ENCODE measurements at regions of chr11 and their contacts with region 1.

Region 1: GRCh38 chr11:45252134-45252855 is 33.8 kb downstream of the SYT13 start:
- DNase-seq: peak; percentile 54 to 96
- H3K4me3 ChIP-seq: no peak overlapping the region
- H3K27ac ChIP-seq: no peak overlapping the region
- H3K4me1 ChIP-seq: no peaks in the 10 kb centered on the region; a peak in 1 of 7 replicates
- H3K27me3 ChIP-seq: no peaks in the 10 kb centered on the region
- CTCF ChIP-seq: peak; percentile 90 to 95 (median 92)
- EP300 ChIP-seq: no peak; a peak in 1 of 3 replicates
- POLR2A ChIP-seq: no peak
- RAD21 ChIP-seq: peak; percentile 83 to 86

Region 2: GRCh38 chr11:45209891-45210699 is 42.2 kb before region 1 on chr11:
- CTCF ChIA-PET with region 1: interaction called, 22 read pairs
- POLR2A ChIA-PET with region 1: no interaction called
- DNase-seq: peak in 1 of 2 experiments; percentile 70
- H3K4me3 ChIP-seq: no peak overlapping the region
- H3K27ac ChIP-seq: no peak overlapping the region
- H3K4me1 ChIP-seq: peaks cover 3 to 22% (median 14%) of the 10 kb centered on the region in 4 experiments
- H3K27me3 ChIP-seq: no peaks in the 10 kb centered on the region
- CTCF ChIP-seq: no peak
- EP300 ChIP-seq: peak; percentile 66 to 89; a peak in 1 of 3 replicates
- POLR2A ChIP-seq: peak in 1 of 2 experiments; percentile 39; a peak in 1 of 3 replicates
- RAD21 ChIP-seq: no peak

Region 3: GRCh38 chr11:45233121-45233803 is 19.0 kb before region 1 on chr11:
- CTCF ChIA-PET with region 1: interaction called, 78 read pairs
- POLR2A ChIA-PET with region 1: interaction called, 3 read pairs
- DNase-seq: peak; percentile 53 to 94
- H3K4me3 ChIP-seq: peak overlapping the region in 1 of 4 experiments; percentile 22; a peak in 1 of 8 replicates
- H3K27ac ChIP-seq: no peak overlapping the region
- H3K4me1 ChIP-seq: peaks cover 0 to 4% (median 2%) of the 10 kb centered on the region in 4 experiments; a peak in 2 of 7 replicates
- H3K27me3 ChIP-seq: no peaks in the 10 kb centered on the region
- CTCF ChIP-seq: peak; percentile 73 to 98 (median 94)
- EP300 ChIP-seq: no peak
- POLR2A ChIP-seq: no peak
- RAD21 ChIP-seq: peak; percentile 52 to 59

Region 4: DNA sequence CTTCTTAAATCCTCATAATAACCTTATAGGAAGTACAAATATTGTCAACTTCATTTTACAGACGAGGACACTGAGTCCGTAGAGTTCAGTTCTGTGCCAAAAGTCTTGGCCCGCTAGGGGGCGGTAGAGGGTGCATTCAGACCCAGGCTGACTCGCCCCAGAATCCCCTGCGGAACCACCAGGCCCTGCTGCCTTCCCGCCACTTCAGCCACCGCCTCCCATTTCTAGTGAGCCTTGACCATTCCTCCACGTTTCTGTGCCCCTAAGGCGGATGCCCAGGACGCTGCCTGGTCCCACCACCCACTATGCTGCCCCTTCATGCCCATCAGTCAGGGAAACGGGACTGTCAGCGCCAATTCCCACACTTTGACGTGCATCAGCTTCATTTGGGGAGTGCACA is 14.8 kb after region 1 on chr11:
- CTCF ChIA-PET with region 1: interaction called, 63 read pairs
- POLR2A ChIA-PET with region 1: no interaction called
- DNase-seq: peak in 1 of 2 experiments; percentile 97
- H3K4me3 ChIP-seq: no peak overlapping the region
- H3K27ac ChIP-seq: no peak overlapping the region
- H3K4me1 ChIP-seq: peaks cover 0 to 2% (median 0%) of the 10 kb centered on the region in 4 experiments; a peak in 1 of 7 replicates
- H3K27me3 ChIP-seq: peaks cover 0 to 7% (median under 1%) of the 10 kb centered on the region in 4 experiments; a peak in 3 of 7 replicates
- CTCF ChIP-seq: peak; percentile 82 to 86 (median 84)
- EP300 ChIP-seq: no peak
- POLR2A ChIP-seq: no peak
- RAD21 ChIP-seq: peak; percentile 61 to 65

Region 5: GRCh38 chr11:45285930-45286632 is 33.8 kb after region 1 on chr11 and contains the start of gene SYT13:
- CTCF ChIA-PET with region 1: interaction called, 30 read pairs
- POLR2A ChIA-PET with region 1: interaction called, 3 read pairs
- DNase-seq: peak; percentile 54 to 88
- H3K4me3 ChIP-seq: peak within 1 kb of the TSS; percentile 63 to 80 (median 70)
- H3K27ac ChIP-seq: no peak within 1 kb of the TSS
- H3K4me1 ChIP-seq: peaks cover 0 to 9% (median 3%) of the 10 kb centered on the region in 4 experiments; a peak in 5 of 7 replicates
- H3K27me3 ChIP-seq: peaks cover 2 to 18% (median 14%) of the 10 kb centered on the region in 4 experiments
- CTCF ChIP-seq: no peak
- EP300 ChIP-seq: no peak
- POLR2A ChIP-seq: peak in 1 of 2 experiments; percentile 49; a peak in 2 of 3 replicates
- RAD21 ChIP-seq: no peak
- total RNA-seq, gene SYT13: 12.3 and 13.2 TPM in 2 replicates

Region 6: DNA sequence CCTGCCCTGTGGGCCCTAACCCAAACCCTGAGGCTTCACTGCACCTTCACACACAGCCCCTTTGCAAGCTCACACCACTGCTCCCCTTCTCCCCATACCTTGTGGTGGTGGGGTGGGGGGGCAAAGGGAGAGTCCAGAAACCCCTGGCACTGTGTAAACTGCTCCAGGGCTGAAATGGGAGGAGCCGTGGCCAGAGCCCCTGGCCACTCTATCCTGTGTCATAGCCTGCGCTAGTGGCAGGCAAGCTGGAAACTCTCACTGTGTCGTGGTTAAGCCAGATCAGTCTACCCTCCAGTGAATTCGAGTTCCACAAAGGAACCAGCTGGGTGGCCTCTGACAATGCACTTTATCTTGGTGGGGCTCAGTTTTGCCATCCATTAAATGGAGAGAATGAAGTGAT is 42.2 kb after region 1 on chr11:
- CTCF ChIA-PET with region 1: interaction called, 27 read pairs
- POLR2A ChIA-PET with region 1: no interaction called
- DNase-seq: no peak
- H3K4me3 ChIP-seq: no peak overlapping the region
- H3K27ac ChIP-seq: no peak overlapping the region
- H3K4me1 ChIP-seq: peaks cover 0 to 3% (median 1%) of the 10 kb centered on the region in 4 experiments; a peak in 3 of 7 replicates
- H3K27me3 ChIP-seq: peaks cover 0 to under 1% (median 0%) of the 10 kb centered on the region in 4 experiments; a peak in 3 of 7 replicates
- CTCF ChIP-seq: no peak
- EP300 ChIP-seq: no peak
- POLR2A ChIP-seq: no peak
- RAD21 ChIP-seq: no peak

Region 7: DNA sequence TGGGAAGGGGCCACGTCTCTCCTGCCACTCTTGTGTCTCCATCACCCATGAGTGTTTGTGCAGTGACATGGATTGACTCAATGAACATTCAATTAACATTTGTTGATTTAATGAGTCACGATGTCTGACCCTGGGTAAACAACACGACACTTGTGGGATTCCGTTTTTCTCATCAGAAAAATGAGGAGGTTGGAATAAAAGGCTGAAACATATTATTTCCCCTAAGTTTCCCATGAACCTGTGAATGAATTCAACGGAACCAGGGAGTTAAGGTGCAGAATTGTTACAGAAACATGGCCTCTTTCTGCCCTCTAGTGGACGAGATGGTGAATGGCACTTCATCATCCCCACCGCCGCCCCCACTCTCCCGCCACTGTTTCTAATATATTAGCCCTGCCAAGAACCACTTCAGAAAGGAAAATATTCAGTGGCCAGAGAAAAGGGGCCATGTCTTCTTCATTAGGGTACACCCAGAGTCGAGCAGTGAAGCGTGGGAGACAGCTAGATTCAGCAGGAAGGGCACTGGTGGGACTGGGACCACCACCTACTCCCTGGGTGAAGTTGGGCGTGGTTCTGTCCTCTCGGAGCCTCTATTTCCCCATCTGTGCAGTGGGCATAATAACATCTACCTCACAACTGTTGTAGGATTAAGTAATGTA is 80.1 kb after region 1 on chr11:
- CTCF ChIA-PET with region 1: interaction called, 13 read pairs
- POLR2A ChIA-PET with region 1: no interaction called
- DNase-seq: peak in 1 of 2 experiments; percentile 68
- H3K4me3 ChIP-seq: no peak overlapping the region
- H3K27ac ChIP-seq: no peak overlapping the region
- H3K4me1 ChIP-seq: no peaks in the 10 kb centered on the region
- H3K27me3 ChIP-seq: no peaks in the 10 kb centered on the region; a peak in 1 of 7 replicates
- CTCF ChIP-seq: peak; percentile 44 to 65 (median 49)
- EP300 ChIP-seq: no peak
- POLR2A ChIP-seq: no peak
- RAD21 ChIP-seq: peak; percentile 80 to 82